Astrocyte of the cerebellum (primary cell): ENCODE measurements at regions of chr15 and their contacts with region 1.

Region 1: DNA sequence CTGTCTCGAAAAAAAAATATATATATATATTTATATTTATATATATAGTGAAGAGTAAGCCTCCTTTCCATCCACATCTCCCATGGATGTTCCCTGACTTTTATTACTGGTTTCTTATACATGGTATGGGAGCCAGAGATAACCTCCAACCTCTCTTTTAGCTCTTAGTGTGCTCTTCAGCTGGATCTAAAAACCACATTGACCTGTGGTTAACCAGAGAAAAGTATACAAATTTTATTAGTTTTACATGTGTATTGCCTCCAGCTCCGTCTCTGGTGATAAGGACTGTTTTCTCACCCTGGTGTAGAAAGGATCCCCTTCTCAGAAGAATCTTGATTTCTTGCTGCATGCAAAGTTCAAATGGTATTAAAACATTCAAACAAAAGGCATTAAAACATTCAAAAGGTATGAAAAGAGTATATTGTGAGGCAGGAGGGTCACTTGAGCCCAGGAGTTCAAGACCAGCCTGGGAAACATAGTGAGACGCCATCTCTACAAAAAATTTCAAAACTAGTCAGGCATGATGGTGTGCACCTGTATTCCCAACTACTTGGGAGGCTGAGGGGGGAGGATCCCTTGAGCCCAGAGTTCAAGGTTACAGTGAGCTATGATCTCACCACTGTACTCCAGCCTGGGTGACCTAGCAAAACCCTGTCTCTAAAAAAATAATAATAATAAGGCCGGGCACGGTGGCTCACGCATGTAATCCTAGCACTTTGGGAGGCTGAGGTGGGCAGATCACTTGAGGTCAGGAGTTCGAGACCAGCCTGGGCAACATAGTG is 13.5 kb upstream of the TTBK2 start:
- DNase-seq: no peak
- H3K4me3 ChIP-seq: no peak overlapping the region
- CTCF ChIP-seq: no peak

Region 2: GRCh38 chr15:42679285-42680141 is 254.6 kb before region 1 on chr15:
- in situ Hi-C with region 1: loop called (anchors 25 kb)
- DNase-seq: no peak
- H3K4me3 ChIP-seq: no peak overlapping the region
- CTCF ChIP-seq: no peak

Region 3: GRCh38 chr15:42999201-42999779 is 65.2 kb after region 1 on chr15:
- in situ Hi-C with region 1: no loop called
- DNase-seq: no peak
- H3K4me3 ChIP-seq: no peak overlapping the region
- CTCF ChIP-seq: no peak